ENCODE measurements at regions of chr18 and their contacts with region 1.

Region 1: DNA sequence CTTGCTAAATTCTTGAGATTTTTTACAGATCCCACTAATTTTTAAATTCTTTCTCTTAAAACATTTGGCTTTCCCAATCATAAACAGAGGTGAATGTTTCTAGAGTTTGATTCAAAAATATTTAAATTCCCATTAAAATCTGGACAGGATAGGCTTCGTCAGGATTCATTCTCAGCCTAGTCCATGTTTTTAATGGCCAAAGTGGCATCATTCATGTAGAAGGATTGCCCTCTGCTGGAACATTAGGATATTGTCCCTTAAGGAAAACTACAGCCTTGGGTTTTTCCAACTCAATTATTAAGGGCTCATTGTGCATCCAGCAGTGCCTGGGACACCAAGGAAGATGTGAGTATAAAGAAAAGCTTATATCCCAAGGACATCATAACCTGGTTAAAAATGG is 71.7 kb downstream of the TPGS2 start:
- DNase-seq: peak; percentile 28
- H3K4me3 ChIP-seq: no peak overlapping the region
- H3K27ac ChIP-seq: peak overlapping the region in 1 of 2 donors; percentile 50
- H3K4me1 ChIP-seq: peaks cover 6% of the 10 kb centered on the region
- H3K27me3 ChIP-seq: no peaks in the 10 kb centered on the region
- CTCF ChIP-seq: peak; percentile 25 to 80 (median 72)
- POLR2A ChIP-seq: no peak

Region 2: DNA sequence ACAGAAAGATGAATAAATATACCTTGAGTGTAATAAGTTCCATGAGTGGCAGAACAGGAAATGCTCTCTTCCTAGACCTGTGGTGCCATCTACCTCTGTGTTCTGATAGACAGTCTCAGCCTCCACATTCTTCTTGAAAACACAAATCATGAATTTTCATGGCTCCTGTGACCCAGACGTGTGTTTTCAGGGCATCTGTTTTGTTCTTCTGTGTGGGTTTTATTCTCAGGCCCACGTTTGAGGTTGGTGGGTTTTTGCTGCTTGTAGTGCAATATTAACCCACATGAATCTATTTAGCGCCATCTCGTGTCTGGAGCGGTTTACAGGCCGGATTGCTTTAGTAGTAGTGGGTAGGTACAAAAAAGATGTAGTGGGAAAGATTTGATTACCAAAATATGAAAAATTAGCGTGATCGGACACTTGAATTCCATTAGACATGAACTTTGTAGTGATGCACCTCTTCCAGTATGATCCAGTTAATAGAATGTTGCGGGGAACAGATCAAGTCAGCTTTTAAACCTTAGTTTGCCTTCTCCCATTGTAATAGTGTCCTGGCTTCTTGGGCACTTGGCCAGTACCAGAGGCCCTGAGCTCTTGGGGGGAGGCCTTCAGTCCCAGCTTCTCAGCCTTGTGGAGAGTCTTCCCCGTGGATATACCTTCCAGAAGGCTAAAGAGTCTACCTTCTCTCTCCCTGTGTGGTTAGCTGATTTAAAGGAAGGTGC is 184.8 kb before region 1 on chr18:
- intact Hi-C with region 1: loop called (anchors 5 kb)
- DNase-seq: peak; percentile 40
- H3K4me3 ChIP-seq: no peak overlapping the region
- H3K27ac ChIP-seq: no peak overlapping the region
- H3K4me1 ChIP-seq: no peaks in the 10 kb centered on the region
- H3K27me3 ChIP-seq: no peaks in the 10 kb centered on the region
- CTCF ChIP-seq: peak in 3 of 4 experiments; percentile 46 to 56 (median 52)
- POLR2A ChIP-seq: no peak

Region 3: GRCh38 chr18:36688020-36688965 is 68.8 kb before region 1 on chr18:
- intact Hi-C with region 1: loop called (anchors 1 kb)
- DNase-seq: peak; percentile 81
- H3K4me3 ChIP-seq: no peak overlapping the region
- H3K27ac ChIP-seq: no peak overlapping the region
- H3K4me1 ChIP-seq: no peaks in the 10 kb centered on the region
- H3K27me3 ChIP-seq: no peaks in the 10 kb centered on the region
- CTCF ChIP-seq: peak; percentile 59 to 93 (median 85)
- POLR2A ChIP-seq: no peak